Heart left ventricle (tissue), 16 donors: ENCODE measurements at regions of chr12 and their contacts with region 1.

Region 1: GRCh38 chr12:121678716-121679580 is 9.5 kb upstream of the MORN3 start:
- DNase-seq: no peak
- ATAC-seq: no peak
- H3K4me3 ChIP-seq: no peak overlapping the region
- H3K27ac ChIP-seq: no peak overlapping the region
- H3K4me1 ChIP-seq: no peaks in the 10 kb centered on the region
- H3K27me3 ChIP-seq: no peaks in the 10 kb centered on the region
- CTCF ChIP-seq: no peak
- POLR2A ChIP-seq: no peak

Region 2: GRCh38 chr12:121494093-121494787 is 184.7 kb before region 1 on chr12:
- intact Hi-C with region 1: loop called in 8 of 10 experiments (anchors 2 to 5 kb)
- DNase-seq: peak in 1 of 5 donors; percentile 27
- ATAC-seq: peak in 1 of 4 donors; percentile 28
- H3K4me3 ChIP-seq: no peak overlapping the region
- H3K27ac ChIP-seq: no peak overlapping the region
- H3K4me1 ChIP-seq: peaks cover 0 to 22% (median 0%) of the 10 kb centered on the region in 12 donors
- H3K27me3 ChIP-seq: no peaks in the 10 kb centered on the region
- CTCF ChIP-seq: peak; percentile 57 to 82 (median 74)
- POLR2A ChIP-seq: no peak

Region 3: GRCh38 chr12:121499929-121500793 is 178.8 kb before region 1 on chr12:
- intact Hi-C with region 1: loop called in 9 of 10 experiments (anchors 2 to 5 kb)
- DNase-seq: peak; percentile 70 to 87 (median 79)
- ATAC-seq: peak; percentile 81 to 90 (median 84)
- H3K4me3 ChIP-seq: peak overlapping the region in 9 of 12 donors; percentile 25 to 52 (median 38)
- H3K27ac ChIP-seq: peak overlapping the region; percentile 20 to 87 (median 72)
- H3K4me1 ChIP-seq: peaks cover 0 to 21% (median 9%) of the 10 kb centered on the region in 12 donors
- H3K27me3 ChIP-seq: no peaks in the 10 kb centered on the region
- CTCF ChIP-seq: peak in 11 of 12 donors; percentile 97 to 99 (median 99)
- POLR2A ChIP-seq: no peak

Region 4: DNA sequence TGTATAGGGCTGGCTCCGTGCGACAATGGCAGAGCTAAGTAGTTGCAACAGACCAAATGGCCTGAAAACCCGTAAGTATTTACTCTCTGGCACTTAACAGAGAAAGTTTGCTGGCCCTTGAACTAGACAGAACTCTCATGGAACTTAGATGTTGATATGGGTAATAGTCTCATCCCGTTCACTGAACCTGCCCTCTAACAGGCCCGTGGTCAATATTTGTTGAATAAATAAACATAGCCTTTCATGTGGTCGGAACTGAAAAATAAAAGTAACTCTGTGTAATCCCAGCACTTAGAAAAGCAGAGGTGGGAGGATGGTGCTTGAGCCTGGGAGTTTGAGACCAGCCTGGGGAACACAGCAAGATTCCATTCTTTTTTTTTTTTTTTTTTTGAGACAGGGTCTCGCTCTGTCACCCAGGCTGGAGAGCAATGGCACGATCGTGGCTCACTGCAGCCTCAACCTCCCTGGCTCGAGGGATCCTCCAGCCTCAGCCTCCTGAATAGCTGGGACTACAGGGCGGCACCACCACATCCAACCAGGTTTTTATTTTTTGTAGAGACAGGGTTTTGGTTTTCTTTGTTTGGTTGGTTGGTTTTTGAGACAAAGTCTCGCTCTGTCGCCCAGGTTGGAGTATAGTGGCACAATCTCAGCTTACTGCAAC is 127.8 kb before region 1 on chr12:
- intact Hi-C with region 1: loop called (anchors 1 to 5 kb)
- DNase-seq: no peak
- ATAC-seq: no peak
- H3K4me3 ChIP-seq: no peak overlapping the region
- H3K27ac ChIP-seq: no peak overlapping the region
- H3K4me1 ChIP-seq: peaks cover 0 to 15% (median 0%) of the 10 kb centered on the region in 12 donors
- H3K27me3 ChIP-seq: no peaks in the 10 kb centered on the region
- CTCF ChIP-seq: no peak
- POLR2A ChIP-seq: no peak

Region 5: DNA sequence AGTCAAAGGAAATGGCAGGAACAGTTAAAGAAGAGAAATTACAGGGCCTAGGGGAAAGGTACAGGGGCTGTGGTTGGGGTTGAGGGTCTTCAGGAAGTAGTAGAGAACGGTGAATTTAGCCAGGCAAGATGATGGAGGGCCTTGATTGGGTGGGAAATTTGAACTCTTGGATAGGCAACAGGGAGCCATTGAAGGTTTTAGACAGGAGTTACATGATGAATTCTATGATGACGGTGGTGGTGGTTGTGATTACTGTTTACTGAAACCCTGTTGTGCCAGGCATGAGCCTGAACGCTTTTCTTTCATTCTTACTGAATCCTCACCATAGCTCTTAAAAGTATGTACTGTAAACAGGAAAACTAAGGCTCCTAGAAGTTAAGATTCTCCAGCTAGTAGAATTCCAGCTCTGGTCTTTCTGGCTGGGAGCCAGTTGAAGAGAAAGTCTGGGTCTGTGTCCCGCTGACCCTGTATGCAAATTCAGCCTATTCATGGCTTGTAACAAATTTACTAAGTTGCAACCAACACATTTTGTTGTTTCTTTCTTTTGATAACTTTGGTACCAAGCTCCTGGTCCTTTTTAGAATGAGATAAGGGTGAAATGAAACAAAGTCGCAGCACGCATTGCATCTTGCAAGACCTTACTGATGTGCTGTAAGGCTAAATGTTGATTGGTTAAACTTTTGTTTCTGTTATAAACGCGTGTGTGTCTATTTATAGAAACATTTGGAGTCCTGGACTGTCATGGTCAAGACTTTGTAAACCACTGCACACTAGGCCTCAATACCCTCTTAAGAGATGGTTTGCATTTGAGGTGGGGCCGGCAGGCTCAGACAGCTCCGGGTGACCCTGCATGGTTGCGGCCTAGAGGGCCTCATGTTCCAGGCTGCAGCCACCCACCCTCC is 46.6 kb before region 1 on chr12:
- intact Hi-C with region 1: loop called in 7 of 10 experiments (anchors 5 to 10 kb)
- DNase-seq: no peak
- ATAC-seq: peak in 1 of 4 donors; percentile 11
- H3K4me3 ChIP-seq: no peak overlapping the region
- H3K27ac ChIP-seq: no peak overlapping the region
- H3K4me1 ChIP-seq: peaks cover 0 to 68% (median 21%) of the 10 kb centered on the region in 12 donors
- H3K27me3 ChIP-seq: no peaks in the 10 kb centered on the region
- CTCF ChIP-seq: no peak
- POLR2A ChIP-seq: no peak